Posterior cingulate gyrus (tissue), 11 donors: ENCODE measurements at regions of chr16 and their contacts with region 1.

Region 1: DNA sequence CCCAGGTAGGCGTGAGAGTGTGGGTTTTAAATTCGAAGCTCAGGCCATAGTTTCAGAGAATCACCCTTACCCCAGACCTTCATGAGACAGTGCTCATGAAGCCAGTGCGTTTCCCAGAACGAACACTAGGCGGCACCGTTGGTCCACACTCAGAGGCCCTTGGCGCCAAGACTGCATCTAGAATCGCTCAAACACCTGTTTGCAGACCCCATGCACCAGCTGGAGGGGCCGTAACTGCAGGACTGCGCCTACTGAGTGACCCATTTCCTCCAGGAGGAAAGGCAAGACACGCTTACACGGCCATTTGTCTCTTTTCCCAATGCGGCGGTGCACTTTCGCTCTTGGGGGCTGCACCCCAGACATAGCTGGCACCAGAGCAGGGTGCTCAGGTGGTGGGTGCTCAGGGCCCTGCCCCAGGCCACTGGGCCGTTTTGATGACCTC is 34.0 kb downstream of the ADGRG5 start:
- DNase-seq: peak; percentile 61 to 96 (median 82)

Region 2: DNA sequence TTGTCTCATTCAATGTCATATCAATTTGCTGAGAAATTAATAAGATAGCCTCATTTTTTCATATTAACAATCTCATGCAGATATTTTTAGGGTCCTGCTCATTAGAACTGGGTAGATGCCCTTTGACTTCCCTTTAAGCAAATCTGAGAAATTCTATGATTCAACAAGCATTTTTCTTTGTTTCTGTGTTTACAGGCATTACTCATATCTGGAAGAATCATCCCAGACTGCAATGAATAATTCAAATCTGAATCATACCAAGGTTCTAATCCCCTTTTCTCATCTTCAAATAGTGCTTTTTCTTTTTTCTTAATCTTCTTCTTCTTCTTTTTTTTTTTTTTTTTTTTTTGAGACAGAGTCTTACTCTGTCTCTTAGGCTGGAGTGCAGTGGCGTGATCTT is 295.0 kb after region 1 on chr16:
- intact Hi-C with region 1: loop called (anchors 10 kb)
- DNase-seq: no peak